Activated CD8-positive, alpha-beta memory T cell treated with anti-CD3 and anti-CD28 coated beads, Interleukin-2, amount 10 ng/mL, durations not matched to agents 7 days and 5 days (primary cell): ENCODE measurements at regions of chr3 and their contacts with region 1.

Region 1: GRCh38 chr3:127697551-127698240 is 24.9 kb downstream of the ABTB1 start:
- DNase-seq: peak; percentile 76
- ATAC-seq: peak; percentile 85
- H3K4me3 Mint-ChIP-seq: no peak overlapping the region
- H3K27ac Mint-ChIP-seq: no peak overlapping the region
- H3K4me1 Mint-ChIP-seq: peaks cover 8% of the 10 kb centered on the region
- H3K27me3 Mint-ChIP-seq: no peaks in the 10 kb centered on the region

Region 2: DNA sequence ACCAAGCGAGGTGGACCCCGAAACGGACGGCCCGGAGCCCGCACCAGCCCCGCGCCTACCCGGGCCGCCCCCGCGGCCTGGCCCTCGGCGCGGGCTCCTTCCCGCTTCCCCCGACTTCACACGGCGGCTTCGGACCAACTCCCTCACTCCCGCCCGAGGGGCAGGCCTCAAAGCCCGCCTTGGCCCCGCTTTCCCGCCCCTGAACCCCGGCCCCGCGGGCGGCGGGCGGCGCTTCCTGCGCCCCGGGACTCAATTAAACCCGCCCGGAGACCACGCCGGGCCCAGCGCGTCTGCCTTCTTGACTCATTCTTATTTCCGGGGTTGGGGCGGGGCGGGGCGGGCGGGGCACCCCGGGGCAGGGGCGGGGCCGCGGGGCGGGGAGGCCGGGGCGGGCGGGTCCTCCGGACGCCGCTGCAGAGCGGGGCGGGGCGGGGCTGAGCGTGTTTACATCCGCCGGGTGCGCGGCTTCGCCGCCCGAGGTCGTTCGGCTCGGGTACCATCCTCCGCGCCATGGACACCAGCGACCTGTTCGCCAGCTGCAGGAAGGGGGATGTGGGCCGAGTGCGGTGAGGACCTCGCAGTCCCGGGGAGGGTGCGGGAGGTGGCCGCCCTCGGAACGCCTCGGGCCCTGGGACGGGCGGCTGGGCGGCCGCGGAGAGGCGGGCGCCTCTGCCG is 25.0 kb before region 1 on chr3 and contains the start of gene ABTB1:
- CTCF ChIA-PET with region 1: interaction called, 10 read pairs
- DNase-seq: peak; percentile 90
- ATAC-seq: peak; percentile 88
- H3K4me3 Mint-ChIP-seq: peak within 1 kb of the TSS; percentile 82
- H3K27ac Mint-ChIP-seq: peak within 1 kb of the TSS; percentile 95
- H3K4me1 Mint-ChIP-seq: peaks cover 14% of the 10 kb centered on the region
- H3K27me3 Mint-ChIP-seq: no peaks in the 10 kb centered on the region
- total RNA-seq, gene ABTB1: 16.0 to 19.4 TPM

Region 3: GRCh38 chr3:127684871-127685707 is 12.6 kb before region 1 on chr3:
- CTCF ChIA-PET with region 1: interaction called, 29 read pairs
- DNase-seq: no peak
- ATAC-seq: peak; percentile 53
- H3K4me3 Mint-ChIP-seq: no peak overlapping the region
- H3K27ac Mint-ChIP-seq: no peak overlapping the region
- H3K4me1 Mint-ChIP-seq: peaks cover 3% of the 10 kb centered on the region
- H3K27me3 Mint-ChIP-seq: no peaks in the 10 kb centered on the region

Region 4: GRCh38 chr3:127881586-127881985 is 183.9 kb after region 1 on chr3:
- CTCF ChIA-PET with region 1: no interaction called
- DNase-seq: no peak
- ATAC-seq: no peak
- H3K4me3 Mint-ChIP-seq: no peak overlapping the region
- H3K27ac Mint-ChIP-seq: no peak overlapping the region
- H3K4me1 Mint-ChIP-seq: no peaks in the 10 kb centered on the region
- H3K27me3 Mint-ChIP-seq: peaks cover 24% of the 10 kb centered on the region